ENCODE measurements at regions of chr1 and their contacts with region 1.

Region 1: DNA sequence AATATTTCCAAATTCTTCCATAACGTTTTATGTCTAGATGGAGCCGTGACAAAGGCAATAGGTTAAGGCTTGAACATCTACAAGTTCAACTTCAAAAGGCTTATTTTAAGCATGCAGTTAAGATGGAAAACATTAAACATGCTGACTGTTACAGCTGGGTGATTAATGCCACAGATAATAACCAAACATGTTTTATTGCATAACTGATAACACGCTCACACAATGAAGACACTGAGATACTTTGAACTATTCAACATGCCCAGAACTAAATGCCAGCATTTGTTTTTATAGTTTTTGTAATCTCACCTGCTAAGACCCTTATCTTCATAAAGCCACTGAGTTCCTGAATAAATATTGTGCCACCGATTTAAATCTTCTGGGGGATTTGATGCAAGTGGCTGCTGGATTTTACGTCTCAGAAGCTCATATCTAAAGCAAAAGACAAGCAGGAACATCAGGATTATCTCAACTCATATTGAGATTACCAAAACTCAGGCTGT is 310.4 kb downstream of the KCTD3 start:
- DNase-seq: no peak
- H3K4me3 ChIP-seq: no peak overlapping the region
- H3K27ac ChIP-seq: no peak overlapping the region
- H3K4me1 ChIP-seq: no peaks in the 10 kb centered on the region
- H3K27me3 ChIP-seq: no peaks in the 10 kb centered on the region
- CTCF ChIP-seq: no peak
- EP300 ChIP-seq: no peak
- POLR2A ChIP-seq: no peak

Region 2: GRCh38 chr1:215807911-215808436 is 69.5 kb before region 1 on chr1:
- in situ Hi-C with region 1: no loop called
- intact Hi-C with region 1: loop called (anchors 2 kb)
- DNase-seq: no peak
- H3K4me3 ChIP-seq: no peak overlapping the region
- H3K27ac ChIP-seq: no peak overlapping the region
- H3K4me1 ChIP-seq: no peaks in the 10 kb centered on the region
- H3K27me3 ChIP-seq: no peaks in the 10 kb centered on the region
- CTCF ChIP-seq: no peak
- EP300 ChIP-seq: no peak
- POLR2A ChIP-seq: no peak

Region 3: DNA sequence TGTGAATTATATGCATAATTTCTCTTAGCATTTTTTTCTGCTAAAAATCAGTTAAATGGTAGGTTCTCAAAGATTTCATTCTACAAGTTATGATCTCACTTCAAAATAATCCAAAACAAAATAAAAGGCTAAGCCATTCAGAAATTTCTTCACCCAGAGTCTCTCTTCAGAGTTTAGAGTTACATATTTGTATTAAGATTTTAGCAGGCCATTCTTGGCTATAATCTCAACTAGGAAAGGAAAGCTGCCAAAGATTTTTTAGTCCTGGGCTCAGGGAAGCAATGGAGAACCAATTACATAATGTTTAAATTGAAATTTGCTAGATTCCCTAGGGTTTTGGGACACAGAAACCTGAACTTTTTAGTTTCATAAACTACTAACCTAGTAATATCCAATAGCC is 300.8 kb after region 1 on chr1:
- in situ Hi-C with region 1: no loop called
- intact Hi-C with region 1: no loop called
- DNase-seq: no peak
- H3K4me3 ChIP-seq: no peak overlapping the region
- H3K27ac ChIP-seq: no peak overlapping the region
- H3K4me1 ChIP-seq: peaks cover 0 to 6% (median 0%) of the 10 kb centered on the region in 4 donors
- H3K27me3 ChIP-seq: no peaks in the 10 kb centered on the region
- CTCF ChIP-seq: no peak
- EP300 ChIP-seq: no peak
- POLR2A ChIP-seq: no peak